Transverse colon (tissue), 4 donors: ENCODE measurements at regions of chr18 and their contacts with region 1.

Region 1: GRCh38 chr18:44374966-44375365 is 305.7 kb upstream of the SETBP1 start:
- DNase-seq: no peak
- H3K4me3 ChIP-seq: no peak overlapping the region
- H3K27ac ChIP-seq: no peak overlapping the region
- H3K4me1 ChIP-seq: no peaks in the 10 kb centered on the region
- H3K27me3 ChIP-seq: no peaks in the 10 kb centered on the region
- CTCF ChIP-seq: no peak
- EP300 ChIP-seq: no peak
- POLR2A ChIP-seq: no peak

Region 2: GRCh38 chr18:43789234-43790000 is 585.5 kb before region 1 on chr18:
- in situ Hi-C with region 1: no loop called
- intact Hi-C with region 1: no loop called
- DNase-seq: no peak
- H3K4me3 ChIP-seq: no peak overlapping the region
- H3K27ac ChIP-seq: no peak overlapping the region
- H3K4me1 ChIP-seq: no peaks in the 10 kb centered on the region
- H3K27me3 ChIP-seq: no peaks in the 10 kb centered on the region
- CTCF ChIP-seq: no peak
- EP300 ChIP-seq: no peak
- POLR2A ChIP-seq: no peak

Region 3: DNA sequence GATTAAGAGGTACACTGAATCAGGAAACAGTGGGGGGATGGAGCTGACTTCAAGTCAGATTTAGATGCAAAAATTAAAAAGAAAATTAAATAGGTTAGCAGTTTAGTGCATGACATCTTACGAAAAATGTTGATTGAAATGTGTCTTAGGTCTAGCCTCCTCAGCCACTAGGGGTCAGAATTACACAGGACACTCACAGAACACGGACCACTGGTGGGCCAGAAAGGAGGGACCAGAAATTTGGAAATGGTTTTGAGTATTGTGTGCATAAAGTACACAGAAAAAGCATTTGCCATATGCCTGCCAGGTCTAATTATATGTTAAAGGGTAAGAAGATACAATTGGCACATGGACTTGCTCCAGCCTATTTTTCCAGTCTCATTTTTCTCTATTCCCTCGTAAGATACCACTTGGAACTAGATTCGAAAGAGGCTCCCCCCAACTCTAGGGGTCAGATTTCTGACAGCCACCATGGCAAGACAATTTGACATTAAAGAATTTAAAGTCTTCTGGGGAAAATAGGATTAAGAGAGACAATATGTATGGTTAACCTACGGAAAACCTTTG is 244.5 kb before region 1 on chr18:
- in situ Hi-C with region 1: no loop called
- intact Hi-C with region 1: loop called (anchors 5 kb)
- DNase-seq: peak; percentile 10
- H3K4me3 ChIP-seq: no peak overlapping the region
- H3K27ac ChIP-seq: no peak overlapping the region
- H3K4me1 ChIP-seq: peaks cover 0 to 21% (median 0%) of the 10 kb centered on the region in 4 donors
- H3K27me3 ChIP-seq: no peaks in the 10 kb centered on the region
- CTCF ChIP-seq: peak; percentile 59 to 69 (median 64)
- EP300 ChIP-seq: no peak
- POLR2A ChIP-seq: no peak

Region 4: GRCh38 chr18:44170208-44170880 is 204.6 kb before region 1 on chr18:
- in situ Hi-C with region 1: no loop called
- intact Hi-C with region 1: no loop called
- DNase-seq: no peak
- H3K4me3 ChIP-seq: no peak overlapping the region
- H3K27ac ChIP-seq: no peak overlapping the region
- H3K4me1 ChIP-seq: no peaks in the 10 kb centered on the region
- H3K27me3 ChIP-seq: no peaks in the 10 kb centered on the region
- CTCF ChIP-seq: no peak
- EP300 ChIP-seq: no peak
- POLR2A ChIP-seq: no peak